Naive thymus-derived CD4-positive, alpha-beta T cell (primary cell): ENCODE measurements at regions of chr1 and their contacts with region 1.

Region 1: DNA sequence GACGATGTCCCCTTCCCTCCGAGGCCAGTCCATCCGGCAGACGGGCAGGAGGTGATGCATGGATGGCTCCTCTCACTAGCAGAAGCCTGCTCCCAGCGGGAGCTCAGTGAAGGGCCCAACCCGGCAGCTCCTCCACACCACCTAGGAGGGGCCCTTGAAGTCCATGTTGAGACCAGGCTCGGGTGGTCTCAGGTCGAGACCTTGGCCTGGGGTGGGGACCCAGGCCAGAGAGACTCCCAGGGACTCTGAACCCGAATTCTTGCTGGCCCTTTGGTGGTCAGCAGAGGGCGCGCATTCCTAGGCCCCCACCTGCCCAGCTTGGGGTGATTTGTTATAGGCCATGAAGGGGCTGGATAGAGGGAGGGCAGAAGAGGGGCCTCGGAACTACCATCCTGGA is 642 bp upstream of the NT5C1A start:
- DNase-seq: peak in 5 of 9 donors; percentile 19 to 43 (median 20)
- ATAC-seq: peak; percentile 54
- H3K4me3 ChIP-seq: no peak overlapping the region
- H3K4me3 Mint-ChIP-seq: peak overlapping the region; percentile 37 to 79 (median 64)
- H3K27ac ChIP-seq: no peak overlapping the region
- H3K27ac Mint-ChIP-seq: peak overlapping the region in 1 of 9 donors; percentile 55
- H3K4me1 ChIP-seq: peaks cover 0 to 14% of the 10 kb centered on the region in 2 donors
- H3K4me1 Mint-ChIP-seq: peaks cover 5 to 12% (median 7%) of the 10 kb centered on the region in 7 donors
- H3K27me3 ChIP-seq: peaks cover 0 to 7% of the 10 kb centered on the region in 2 donors
- H3K27me3 Mint-ChIP-seq: peaks cover 23 to 44% (median 29%) of the 10 kb centered on the region in 5 donors

Region 2: DNA sequence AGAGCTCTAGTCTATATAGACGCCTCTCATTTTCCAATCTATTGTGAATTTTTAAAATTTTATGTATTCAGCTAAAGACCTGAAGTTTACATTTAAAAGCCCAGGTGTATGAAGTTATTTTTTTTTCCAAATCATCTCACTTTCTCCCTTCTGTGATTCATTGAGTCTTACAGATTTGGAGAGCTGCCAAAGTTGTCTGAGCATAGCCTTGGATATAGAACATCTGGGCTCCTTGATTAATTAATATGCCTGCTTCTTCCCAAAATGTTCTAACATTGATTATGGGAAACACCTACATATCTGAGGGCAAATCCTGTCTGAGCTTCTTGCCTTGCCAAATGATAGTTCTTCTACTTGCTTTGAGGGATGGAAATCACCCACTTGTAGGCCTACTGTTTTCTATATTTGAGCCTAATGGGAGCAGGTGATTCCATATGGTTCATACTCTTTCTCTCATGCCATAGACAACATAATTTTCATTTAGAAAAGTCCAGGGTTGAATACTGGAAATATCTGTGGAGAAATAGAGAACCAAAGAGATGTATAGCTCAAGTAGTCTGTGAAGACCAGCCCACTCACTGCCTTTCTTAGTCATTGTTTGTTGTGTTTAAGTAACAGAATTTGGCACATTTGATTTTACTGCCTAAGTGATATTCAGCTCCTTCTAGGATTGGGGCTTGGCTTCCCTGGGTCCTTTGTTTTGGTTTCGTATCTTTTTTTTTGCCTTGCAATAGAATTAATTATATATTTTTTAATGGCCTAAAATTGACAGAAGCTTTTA is 421.9 kb before region 1 on chr1:
- CTCF ChIA-PET with region 1: no interaction called
- POLR2A ChIA-PET with region 1: no interaction called
- intact Hi-C with region 1: no loop called
- DNase-seq: no peak
- ATAC-seq: no peak
- H3K4me3 ChIP-seq: no peak overlapping the region
- H3K4me3 Mint-ChIP-seq: no peak overlapping the region
- H3K27ac ChIP-seq: peak overlapping the region; percentile 3
- H3K27ac Mint-ChIP-seq: peak overlapping the region; percentile 7 to 79 (median 45)
- H3K4me1 ChIP-seq: no peaks in the 10 kb centered on the region
- H3K4me1 Mint-ChIP-seq: peaks cover 17 to 65% (median 41%) of the 10 kb centered on the region in 7 donors
- H3K27me3 ChIP-seq: no peaks in the 10 kb centered on the region
- H3K27me3 Mint-ChIP-seq: no peaks in the 10 kb centered on the region

Region 3: GRCh38 chr1:39609618-39610331 is 62.8 kb before region 1 on chr1:
- CTCF ChIA-PET with region 1: interaction called, 14 read pairs
- POLR2A ChIA-PET with region 1: no interaction called
- intact Hi-C with region 1: loop called in 1 of 2 experiments (anchors 1 kb)
- DNase-seq: peak; percentile 10 to 84 (median 66)
- ATAC-seq: peak; percentile 89
- H3K4me3 ChIP-seq: no peak overlapping the region
- H3K4me3 Mint-ChIP-seq: peak overlapping the region in 2 of 10 donors; percentile 51 to 59
- H3K27ac ChIP-seq: no peak overlapping the region
- H3K27ac Mint-ChIP-seq: no peak overlapping the region
- H3K4me1 ChIP-seq: no peaks in the 10 kb centered on the region
- H3K4me1 Mint-ChIP-seq: peaks cover 0 to 9% (median 8%) of the 10 kb centered on the region in 7 donors
- H3K27me3 ChIP-seq: no peaks in the 10 kb centered on the region
- H3K27me3 Mint-ChIP-seq: peaks cover 0 to 4% (median 0%) of the 10 kb centered on the region in 5 donors

Region 4: GRCh38 chr1:39653546-39654031 is 19.0 kb before region 1 on chr1:
- CTCF ChIA-PET with region 1: interaction called, 45 read pairs
- POLR2A ChIA-PET with region 1: no interaction called
- intact Hi-C with region 1: no loop called
- DNase-seq: peak; percentile 51 to 74 (median 68)
- ATAC-seq: peak; percentile 89
- H3K4me3 ChIP-seq: no peak overlapping the region
- H3K4me3 Mint-ChIP-seq: no peak overlapping the region
- H3K27ac ChIP-seq: no peak overlapping the region
- H3K27ac Mint-ChIP-seq: no peak overlapping the region
- H3K4me1 ChIP-seq: peaks cover 0 to 3% of the 10 kb centered on the region in 2 donors
- H3K4me1 Mint-ChIP-seq: peaks cover 0 to 17% (median 4%) of the 10 kb centered on the region in 7 donors
- H3K27me3 ChIP-seq: no peaks in the 10 kb centered on the region
- H3K27me3 Mint-ChIP-seq: peaks cover 0 to 13% (median 0%) of the 10 kb centered on the region in 5 donors

Region 5: GRCh38 chr1:39683591-39684312 is 11.2 kb after region 1 on chr1:
- CTCF ChIA-PET with region 1: interaction called, 13 read pairs
- POLR2A ChIA-PET with region 1: interaction called, 16 read pairs
- intact Hi-C with region 1: loop called in 1 of 2 experiments (anchors 1 kb)
- DNase-seq: peak in 6 of 9 donors; percentile 39 to 73 (median 57)
- ATAC-seq: peak; percentile 75
- H3K4me3 ChIP-seq: peak overlapping the region; percentile 37
- H3K4me3 Mint-ChIP-seq: peak overlapping the region in 8 of 10 donors; percentile 23 to 70 (median 58)
- H3K27ac ChIP-seq: peak overlapping the region; percentile 60
- H3K27ac Mint-ChIP-seq: peak overlapping the region in 6 of 9 donors; percentile 16 to 75 (median 36)
- H3K4me1 ChIP-seq: peaks cover 0 to 36% of the 10 kb centered on the region in 2 donors
- H3K4me1 Mint-ChIP-seq: peaks cover 14 to 55% (median 35%) of the 10 kb centered on the region in 7 donors
- H3K27me3 ChIP-seq: no peaks in the 10 kb centered on the region
- H3K27me3 Mint-ChIP-seq: peaks cover 0 to 46% (median 26%) of the 10 kb centered on the region in 5 donors

Region 6: GRCh38 chr1:39691262-39692151 is 19.0 kb after region 1 on chr1 and contains the start of gene HPCAL4:
- CTCF ChIA-PET with region 1: interaction called, 19 read pairs
- POLR2A ChIA-PET with region 1: interaction called, 76 read pairs
- intact Hi-C with region 1: loop called in 1 of 2 experiments (anchors 1 kb)
- DNase-seq: peak; percentile 79 to 93 (median 88)
- ATAC-seq: peak; percentile 93
- H3K4me3 ChIP-seq: peak within 1 kb of the TSS; percentile 89
- H3K4me3 Mint-ChIP-seq: peak within 1 kb of the TSS; percentile 71 to 90 (median 86)
- H3K27ac ChIP-seq: peak within 1 kb of the TSS; percentile 69
- H3K27ac Mint-ChIP-seq: peak within 1 kb of the TSS; percentile 60 to 93 (median 84)
- H3K4me1 ChIP-seq: peaks cover 21 to 36% of the 10 kb centered on the region in 2 donors
- H3K4me1 Mint-ChIP-seq: peaks cover 22 to 48% (median 28%) of the 10 kb centered on the region in 7 donors
- H3K27me3 ChIP-seq: no peaks in the 10 kb centered on the region
- H3K27me3 Mint-ChIP-seq: peaks cover 0 to 63% (median 13%) of the 10 kb centered on the region in 5 donors
- total RNA-seq, gene HPCAL4: 2.9 to 49.0 (median 18.7) TPM

Region 7: GRCh38 chr1:39711966-39712340 is 39.4 kb after region 1 on chr1:
- CTCF ChIA-PET with region 1: interaction called, 32 read pairs
- POLR2A ChIA-PET with region 1: interaction called, 3 read pairs
- intact Hi-C with region 1: no loop called
- DNase-seq: no peak
- ATAC-seq: no peak
- H3K4me3 ChIP-seq: no peak overlapping the region
- H3K4me3 Mint-ChIP-seq: no peak overlapping the region
- H3K27ac ChIP-seq: no peak overlapping the region
- H3K27ac Mint-ChIP-seq: no peak overlapping the region
- H3K4me1 ChIP-seq: no peaks in the 10 kb centered on the region
- H3K4me1 Mint-ChIP-seq: no peaks in the 10 kb centered on the region
- H3K27me3 ChIP-seq: no peaks in the 10 kb centered on the region
- H3K27me3 Mint-ChIP-seq: peaks cover 5 to 41% (median 22%) of the 10 kb centered on the region in 5 donors

Region 8: GRCh38 chr1:39738622-39739366 is 66.2 kb after region 1 on chr1 and contains the start of gene PPIE:
- CTCF ChIA-PET with region 1: interaction called, 10 read pairs
- POLR2A ChIA-PET with region 1: interaction called, 4 read pairs
- intact Hi-C with region 1: no loop called
- DNase-seq: peak; percentile 71 to 88 (median 85)
- ATAC-seq: peak; percentile 99
- H3K4me3 ChIP-seq: peak within 1 kb of the TSS; percentile 88
- H3K4me3 Mint-ChIP-seq: peak within 1 kb of the TSS; percentile 86 to 98 (median 96)
- H3K27ac ChIP-seq: peak within 1 kb of the TSS; percentile 74
- H3K27ac Mint-ChIP-seq: peak within 1 kb of the TSS; percentile 92 to 97 (median 96)
- H3K4me1 ChIP-seq: peaks cover 16 to 17% of the 10 kb centered on the region in 2 donors
- H3K4me1 Mint-ChIP-seq: peaks cover 21 to 44% (median 38%) of the 10 kb centered on the region in 7 donors
- H3K27me3 ChIP-seq: no peaks in the 10 kb centered on the region
- H3K27me3 Mint-ChIP-seq: peaks cover 2 to 16% (median 11%) of the 10 kb centered on the region in 5 donors
- total RNA-seq, gene PPIE: 52.3 to 79.1 (median 61.3) TPM

Region 9: DNA sequence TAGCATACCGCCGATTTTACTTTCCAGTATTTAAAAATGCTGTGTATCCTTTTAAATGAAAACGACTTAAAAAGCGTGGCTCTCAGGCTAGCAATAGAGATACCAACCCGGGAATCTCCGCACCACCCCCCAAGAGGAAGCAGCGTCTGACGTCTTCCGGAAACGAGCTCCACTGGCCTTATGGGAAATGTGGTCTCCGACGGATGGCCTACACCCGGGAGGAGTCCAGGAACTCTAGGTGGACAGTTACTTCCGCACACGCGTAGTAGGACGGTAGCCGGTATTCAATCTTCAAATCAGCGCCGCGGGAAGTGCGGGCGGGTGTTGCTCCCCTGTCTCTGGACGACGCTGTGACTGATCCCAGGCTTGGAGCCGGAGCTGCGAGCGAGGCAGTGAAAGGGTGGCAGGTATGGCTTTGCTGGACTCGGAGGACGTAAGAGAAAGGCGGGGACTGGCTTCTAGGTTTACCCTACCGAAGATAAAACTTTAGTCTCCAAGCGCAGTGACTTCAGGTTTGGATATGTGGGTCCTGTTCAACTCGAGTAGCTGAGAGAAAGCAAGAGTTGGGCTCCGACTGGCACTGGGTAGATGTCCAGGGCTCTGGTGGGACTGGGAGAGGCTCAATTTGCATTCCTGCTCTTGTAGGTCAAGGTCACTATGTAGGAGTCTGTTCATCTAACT is 859.0 kb after region 1 on chr1 and contains the start of gene ZNF684:
- CTCF ChIA-PET with region 1: no interaction called
- POLR2A ChIA-PET with region 1: no interaction called
- intact Hi-C with region 1: no loop called
- DNase-seq: peak; percentile 57 to 87 (median 81)
- ATAC-seq: peak; percentile 99
- H3K4me3 ChIP-seq: peak within 1 kb of the TSS; percentile 78
- H3K4me3 Mint-ChIP-seq: peak within 1 kb of the TSS; percentile 89 to 100 (median 98)
- H3K27ac ChIP-seq: peak within 1 kb of the TSS; percentile 80
- H3K27ac Mint-ChIP-seq: peak within 1 kb of the TSS; percentile 59 to 96 (median 93)
- H3K4me1 ChIP-seq: peaks cover 14 to 17% of the 10 kb centered on the region in 2 donors
- H3K4me1 Mint-ChIP-seq: peaks cover 22 to 29% (median 25%) of the 10 kb centered on the region in 7 donors
- H3K27me3 ChIP-seq: no peaks in the 10 kb centered on the region
- H3K27me3 Mint-ChIP-seq: peaks cover 4 to 24% (median 17%) of the 10 kb centered on the region in 5 donors
- total RNA-seq, gene ZNF684: 1.3 to 6.6 (median 3.7) TPM